Posterior cingulate gyrus (tissue), 11 donors: ENCODE measurements at regions of chr1 and their contacts with region 1.

Region 1: DNA sequence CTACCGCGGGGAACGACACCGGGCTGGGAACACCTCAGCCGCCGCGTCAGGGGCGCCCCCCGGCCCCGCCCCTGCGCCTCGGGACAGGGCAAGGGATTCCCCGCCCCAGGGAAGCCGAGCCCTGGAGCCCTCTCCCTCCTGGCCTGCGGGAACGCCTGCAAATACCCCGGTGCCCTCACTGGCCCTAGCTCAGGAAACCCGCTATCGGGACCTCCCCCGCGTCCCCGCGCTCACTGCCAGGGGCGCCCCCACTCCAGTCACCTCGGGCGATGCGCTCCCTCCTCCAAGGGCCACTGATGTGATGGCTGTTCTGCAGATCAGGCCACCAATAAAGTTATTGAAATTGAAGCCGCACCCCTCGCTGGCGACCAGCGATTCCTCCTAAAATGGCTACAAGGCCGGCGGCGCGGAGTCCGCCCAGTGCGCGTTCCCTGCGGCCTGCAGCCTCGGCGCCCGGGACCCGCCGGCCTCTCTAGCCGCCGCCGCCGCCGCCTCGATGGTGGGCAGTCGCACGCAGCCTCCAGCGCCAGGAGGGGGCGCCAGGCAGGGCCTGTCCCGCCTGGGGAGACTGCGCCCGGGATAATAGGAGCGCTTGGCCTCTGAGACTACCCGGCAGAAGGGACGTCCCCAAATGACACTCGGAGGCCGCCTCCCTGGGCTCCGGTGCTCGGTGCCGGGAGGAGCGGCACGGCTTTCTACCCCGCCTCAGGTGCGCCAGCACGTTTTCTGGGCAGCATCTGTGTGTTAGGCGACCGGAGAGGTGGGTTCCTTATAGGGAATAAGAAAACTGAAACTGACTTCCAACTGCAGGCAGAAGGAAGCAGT is at the start of gene PRKAB2:
- DNase-seq: peak; percentile 90 to 99 (median 96)

Region 2: GRCh38 chr1:147242439-147243227 is 70.3 kb after region 1 on chr1 and contains the start of gene CHD1L:
- intact Hi-C with region 1: loop called (anchors 1 kb)
- DNase-seq: peak; percentile 92 to 99 (median 93)